ENCODE measurements at regions of chr14 and their contacts with region 1.

Region 1: DNA sequence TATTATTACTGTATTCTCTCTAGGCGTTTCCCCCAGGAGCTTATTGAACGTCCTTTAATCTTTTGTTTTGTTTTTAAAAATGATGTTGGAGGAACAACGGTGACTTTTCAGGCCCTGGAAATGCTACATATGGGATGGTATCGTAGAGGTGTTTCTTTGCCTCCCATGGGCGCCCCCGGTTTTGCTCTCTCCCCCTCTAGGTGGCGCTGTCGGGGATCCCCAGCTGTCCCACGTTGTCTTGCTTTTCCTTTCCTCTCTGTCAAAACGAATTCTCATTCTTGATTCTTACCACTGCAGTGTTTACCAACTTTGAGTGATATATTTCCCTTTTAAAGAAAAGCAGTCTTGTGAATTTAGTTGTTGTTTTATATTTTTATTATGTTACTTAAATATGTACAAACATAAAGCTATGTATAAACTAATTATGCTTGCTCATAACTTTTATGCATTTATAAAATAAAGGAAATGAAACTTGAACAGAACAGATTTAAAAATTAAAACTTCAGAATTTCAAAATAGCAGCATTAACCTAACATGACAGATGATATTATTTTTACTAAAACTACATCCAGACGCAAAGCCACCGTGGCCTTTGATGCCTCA is 171.9 kb downstream of the RGS6 start:
- DNase-seq: no peak
- ATAC-seq: no peak
- H3K4me3 ChIP-seq: no peak overlapping the region
- H3K27ac ChIP-seq: no peak overlapping the region
- H3K4me1 ChIP-seq: no peaks in the 10 kb centered on the region
- H3K27me3 ChIP-seq: no peaks in the 10 kb centered on the region
- CTCF ChIP-seq: peak; percentile 12

Region 2: DNA sequence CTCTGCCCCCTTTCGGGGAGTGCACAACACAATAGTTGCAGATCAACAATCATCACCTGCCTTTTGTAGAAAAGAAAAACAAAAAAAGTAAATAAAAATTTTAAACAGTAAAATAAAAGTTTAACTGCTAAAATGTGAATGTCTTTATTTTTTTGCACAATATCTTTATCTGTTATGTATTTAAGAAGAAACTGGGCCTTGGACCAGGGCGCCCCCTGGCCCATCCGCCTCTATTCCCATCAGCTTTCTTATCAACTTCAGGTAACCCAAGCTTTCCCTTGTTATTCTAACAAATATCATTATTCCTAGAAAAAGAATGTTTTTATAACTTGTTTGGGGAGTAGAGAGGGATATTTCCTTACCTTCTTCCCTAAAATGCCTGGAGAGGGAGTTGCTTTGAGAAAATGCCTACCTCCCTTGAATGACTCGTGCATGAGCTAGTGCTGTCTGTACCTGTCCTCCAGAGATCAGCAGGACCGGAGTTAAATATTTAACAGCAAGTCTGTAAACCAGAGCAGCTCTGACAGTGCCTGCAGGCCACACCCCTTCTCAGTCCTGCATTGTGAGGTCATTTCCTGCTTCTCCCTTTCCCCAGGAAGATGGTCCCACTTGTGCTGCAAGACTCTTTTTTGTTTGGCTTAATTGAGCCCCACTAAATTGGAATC is 364.7 kb before region 1 on chr14:
- intact Hi-C with region 1: loop called in 1 of 2 experiments (anchors 5 kb)
- DNase-seq: no peak
- ATAC-seq: no peak
- H3K4me3 ChIP-seq: no peak overlapping the region
- H3K27ac ChIP-seq: no peak overlapping the region
- H3K4me1 ChIP-seq: no peaks in the 10 kb centered on the region
- H3K27me3 ChIP-seq: no peaks in the 10 kb centered on the region
- CTCF ChIP-seq: no peak

Region 3: GRCh38 chr14:71749613-71750238 is 354.4 kb before region 1 on chr14:
- intact Hi-C with region 1: no loop called
- DNase-seq: no peak
- ATAC-seq: no peak
- H3K4me3 ChIP-seq: no peak overlapping the region
- H3K27ac ChIP-seq: no peak overlapping the region
- H3K4me1 ChIP-seq: no peaks in the 10 kb centered on the region
- H3K27me3 ChIP-seq: no peaks in the 10 kb centered on the region
- CTCF ChIP-seq: no peak